H1 (cell line): ENCODE measurements at regions of chr16 and their contacts with region 1.

Region 1: GRCh38 chr16:88754912-88755744 is 29.9 kb downstream of the PIEZO1 start:
- DNase-seq: no peak
- H3K4me3 ChIP-seq: no peak overlapping the region
- H3K27ac ChIP-seq: no peak overlapping the region
- H3K4me1 ChIP-seq: peaks cover 0 to 20% (median 7%) of the 10 kb centered on the region in 4 experiments; a peak in 4 of 7 replicates
- H3K27me3 ChIP-seq: no peaks in the 10 kb centered on the region
- CTCF ChIP-seq: no peak
- EP300 ChIP-seq: no peak
- POLR2A ChIP-seq: no peak
- RAD21 ChIP-seq: no peak

Region 2: GRCh38 chr16:88743693-88744576 is 11.2 kb before region 1 on chr16:
- CTCF ChIA-PET with region 1: interaction called, 251 read pairs
- POLR2A ChIA-PET with region 1: interaction called, 4 read pairs
- DNase-seq: peak; percentile 39 to 98
- H3K4me3 ChIP-seq: no peak overlapping the region
- H3K27ac ChIP-seq: no peak overlapping the region
- H3K4me1 ChIP-seq: peaks cover 0 to 11% (median 6%) of the 10 kb centered on the region in 4 experiments; a peak in 4 of 7 replicates
- H3K27me3 ChIP-seq: no peaks in the 10 kb centered on the region
- CTCF ChIP-seq: peak; percentile 81 to 96 (median 93)
- EP300 ChIP-seq: no peak
- POLR2A ChIP-seq: no peak
- RAD21 ChIP-seq: peak; percentile 44 to 51

Region 3: DNA sequence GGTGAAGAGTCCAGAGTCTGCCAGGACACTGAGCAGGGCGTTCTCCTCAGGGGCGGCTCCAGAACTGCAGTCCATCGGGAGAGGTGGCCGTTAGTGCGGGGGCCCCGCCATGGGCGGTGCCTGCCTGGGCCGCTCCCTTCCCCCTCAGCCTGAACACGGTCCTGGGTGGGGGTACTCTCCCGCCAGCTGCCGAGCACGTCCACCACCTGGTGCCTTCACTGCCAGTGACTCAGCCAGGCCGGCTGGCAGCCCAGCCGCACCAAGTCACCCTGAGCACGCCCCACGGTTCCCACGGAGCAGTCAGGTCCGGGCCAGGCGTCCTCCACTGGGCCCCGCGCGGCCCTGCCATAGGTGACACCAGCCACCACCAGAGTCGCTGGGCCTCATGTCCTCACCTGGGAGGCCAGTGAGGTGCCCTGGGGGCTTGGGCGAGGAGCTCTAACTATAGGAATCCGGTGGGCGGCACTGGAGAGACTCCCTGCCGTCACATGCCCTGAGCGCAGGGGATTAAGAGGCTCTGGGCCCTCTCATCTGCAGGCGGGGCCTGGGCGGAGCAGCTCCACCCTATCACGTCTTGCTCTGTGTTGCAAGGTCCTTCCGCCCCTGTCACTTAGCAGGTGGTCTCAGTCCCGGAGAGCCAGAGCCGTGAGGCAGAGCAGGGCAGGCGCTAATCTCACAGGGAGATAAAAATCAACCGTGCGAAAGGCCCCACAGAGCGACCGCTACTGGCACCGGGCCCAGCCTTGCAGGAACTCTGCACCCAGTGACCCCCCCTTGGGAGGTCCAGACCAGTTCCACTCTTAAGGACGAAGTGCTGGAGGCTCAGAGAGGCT is 15.5 kb after region 1 on chr16:
- CTCF ChIA-PET with region 1: interaction called, 146 read pairs
- POLR2A ChIA-PET with region 1: interaction called, 5 read pairs
- DNase-seq: peak in 1 of 2 experiments; percentile 69
- H3K4me3 ChIP-seq: no peak overlapping the region
- H3K27ac ChIP-seq: no peak overlapping the region
- H3K4me1 ChIP-seq: peaks cover 6 to 41% (median 29%) of the 10 kb centered on the region in 4 experiments
- H3K27me3 ChIP-seq: no peaks in the 10 kb centered on the region
- CTCF ChIP-seq: no peak
- EP300 ChIP-seq: no peak
- POLR2A ChIP-seq: no peak
- RAD21 ChIP-seq: no peak

Region 4: DNA sequence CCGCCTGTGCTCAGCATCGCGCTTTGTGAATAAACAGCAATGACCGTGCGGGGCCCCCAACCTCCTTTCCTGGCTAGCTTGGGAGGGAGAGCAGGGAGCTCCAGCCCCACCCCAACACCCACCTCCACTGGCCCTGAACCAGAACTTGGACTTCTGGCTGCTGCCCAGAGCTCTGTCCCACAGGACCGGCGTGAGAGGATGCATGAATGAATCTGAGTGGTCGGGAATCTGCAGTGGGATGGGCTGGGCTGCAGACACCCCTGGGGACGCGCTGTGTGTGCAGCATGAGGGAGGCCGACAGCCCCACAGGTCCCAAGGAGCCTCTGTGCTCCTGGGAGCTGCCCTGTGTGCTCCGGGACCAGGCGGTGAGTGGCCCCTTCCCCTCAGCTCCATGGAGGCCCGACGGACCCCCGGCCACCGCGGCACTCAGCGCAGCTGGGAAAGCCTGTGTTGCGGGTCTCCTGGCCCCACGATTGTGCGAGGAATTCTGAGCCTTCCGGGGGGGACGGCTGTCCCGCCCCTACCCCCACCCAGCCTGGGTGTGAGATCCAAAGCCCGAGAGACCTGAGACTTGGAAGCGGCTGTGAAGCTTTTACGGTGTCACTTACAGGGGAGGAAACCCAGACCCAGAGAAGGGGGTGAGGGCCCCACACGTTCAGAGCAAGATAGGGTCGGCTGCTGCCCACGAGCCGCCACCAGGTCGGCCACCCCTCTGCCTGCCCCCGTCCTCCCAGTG is 24.4 kb after region 1 on chr16:
- CTCF ChIA-PET with region 1: interaction called, 15 read pairs
- POLR2A ChIA-PET with region 1: interaction called, 5 read pairs
- DNase-seq: no peak
- H3K4me3 ChIP-seq: no peak overlapping the region
- H3K27ac ChIP-seq: no peak overlapping the region
- H3K4me1 ChIP-seq: peaks cover 2 to 21% (median 10%) of the 10 kb centered on the region in 4 experiments
- H3K27me3 ChIP-seq: no peaks in the 10 kb centered on the region
- CTCF ChIP-seq: no peak
- EP300 ChIP-seq: no peak
- POLR2A ChIP-seq: no peak
- RAD21 ChIP-seq: no peak